ENCODE measurements at regions of chr17 and their contacts with region 1.

Region 1: GRCh38 chr17:3012926-3013581 is 50.4 kb downstream of the OR1D5 start:
- DNase-seq: peak in 9 of 10 donors; percentile 49 to 83 (median 65)
- H3K4me3 ChIP-seq: no peak overlapping the region
- H3K27ac ChIP-seq: peak overlapping the region in 3 of 59 donors; percentile 26 to 33 (median 29)
- H3K27me3 ChIP-seq: no peaks in the 10 kb centered on the region
- CTCF ChIP-seq: peak; percentile 50 to 97 (median 86)

Region 2: GRCh38 chr17:2386400-2387085 is 626.5 kb before region 1 on chr17:
- intact Hi-C with region 1: loop called in 1 of 2 experiments (anchors 10 kb)
- DNase-seq: peak in 2 of 10 donors; percentile 66 to 82
- H3K4me3 ChIP-seq: peak overlapping the region in 1 of 59 donors; percentile 20
- H3K27ac ChIP-seq: peak overlapping the region in 44 of 59 donors; percentile 1 to 81 (median 53)
- H3K27me3 ChIP-seq: no peaks in the 10 kb centered on the region
- CTCF ChIP-seq: no peak

Region 3: GRCh38 chr17:2828397-2829038 is 184.5 kb before region 1 on chr17:
- intact Hi-C with region 1: loop called (anchors 1 to 5 kb)
- DNase-seq: peak in 9 of 10 donors; percentile 53 to 84 (median 65)
- H3K4me3 ChIP-seq: no peak overlapping the region
- H3K27ac ChIP-seq: no peak overlapping the region
- H3K27me3 ChIP-seq: no peaks in the 10 kb centered on the region
- CTCF ChIP-seq: peak; percentile 57 to 98 (median 94)

Region 4: DNA sequence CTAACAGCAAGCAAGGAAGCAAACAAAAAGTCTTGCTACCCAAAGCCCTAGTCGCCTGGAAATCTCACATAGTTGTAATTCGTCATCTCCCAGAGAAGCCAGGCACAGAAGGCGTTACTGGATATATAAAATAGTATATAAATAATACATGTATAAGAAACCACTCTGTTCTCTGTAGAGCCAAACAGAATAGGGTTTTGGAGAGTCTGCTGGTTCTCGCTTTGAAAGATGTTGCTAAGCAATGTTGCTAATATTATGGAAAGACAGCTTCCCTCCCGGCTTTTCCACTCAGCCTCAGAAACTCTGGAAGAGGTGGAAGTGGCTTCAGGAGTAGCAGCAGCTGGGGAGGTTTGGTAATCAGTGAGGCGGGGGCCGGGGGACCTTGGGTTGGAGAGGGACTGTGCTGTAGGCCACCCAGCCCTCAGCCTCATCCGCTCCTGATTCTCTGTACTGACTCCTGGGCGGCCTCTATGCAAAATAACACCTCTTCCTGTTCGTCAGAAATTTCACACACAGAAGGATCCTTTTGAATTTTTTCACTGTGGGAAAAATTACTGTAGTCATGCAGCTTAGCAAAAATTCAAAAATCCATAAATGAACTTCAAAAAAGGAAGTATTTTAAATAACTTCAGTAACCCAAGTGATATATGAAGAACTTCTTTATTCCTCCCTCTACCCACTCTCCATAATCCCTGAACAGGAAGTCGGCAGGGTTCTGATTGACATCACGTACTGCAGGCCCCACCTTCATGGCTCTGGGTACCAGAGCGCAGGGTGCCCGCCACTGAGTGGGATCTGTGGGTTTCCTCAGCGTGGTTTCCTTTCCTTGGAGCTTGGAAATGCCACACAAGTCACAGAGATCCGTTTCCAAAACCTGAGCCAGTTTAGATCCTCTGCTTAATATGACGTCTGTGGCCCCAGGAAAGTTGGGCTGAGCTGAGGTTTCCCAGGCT is 165.4 kb before region 1 on chr17:
- intact Hi-C with region 1: loop called (anchors 1 to 5 kb)
- DNase-seq: no peak
- H3K4me3 ChIP-seq: no peak overlapping the region
- H3K27ac ChIP-seq: peak overlapping the region in 19 of 59 donors; percentile 4 to 60 (median 35)
- H3K27me3 ChIP-seq: peaks cover 0 to 4% (median 0%) of the 10 kb centered on the region in 45 donors
- CTCF ChIP-seq: no peak